ENCODE measurements at regions of chr1 and their contacts with region 1.

Region 1: GRCh38 chr1:115138968-115139367 is 49.7 kb upstream of the TSPAN2 start:
- DNase-seq: peak; percentile 44 to 96 (median 74)

Region 2: DNA sequence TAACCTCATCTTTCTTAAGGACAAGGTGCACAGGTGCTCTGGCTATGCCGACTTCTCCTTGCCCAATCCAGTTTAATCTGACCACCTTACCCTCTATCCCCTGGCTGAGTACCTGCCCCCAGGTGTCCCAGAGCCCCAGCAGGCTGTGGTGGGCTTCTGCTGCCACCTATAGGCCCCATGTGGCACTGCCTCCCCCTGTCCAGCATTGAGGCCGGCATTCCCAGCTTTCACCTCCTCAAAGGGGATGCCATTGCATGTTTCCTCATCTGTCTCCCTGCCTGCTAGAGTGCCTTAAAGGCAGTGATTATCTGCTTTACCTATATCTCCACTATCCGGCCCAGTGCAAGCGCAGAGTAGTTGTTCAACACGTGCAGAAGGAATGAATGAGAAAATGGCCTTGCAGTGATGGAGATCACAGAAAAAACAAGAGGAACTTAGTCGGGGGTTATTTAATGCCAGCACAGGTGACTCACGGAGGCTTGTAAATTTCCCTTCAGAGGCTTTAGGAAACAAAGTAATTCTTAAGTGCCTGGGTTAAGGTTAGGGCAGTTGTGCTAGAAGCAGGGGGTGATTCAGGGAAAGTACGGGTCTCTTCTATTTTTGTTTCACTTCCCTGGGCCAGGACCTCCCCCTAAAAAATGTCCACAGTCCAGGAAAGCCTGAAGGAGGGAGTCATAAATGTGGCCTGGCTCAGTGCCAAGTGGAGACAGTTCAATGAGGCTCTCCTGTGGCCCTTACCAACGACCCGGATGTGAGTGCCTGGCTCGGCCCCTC is 330.9 kb after region 1 on chr1:
- intact Hi-C with region 1: loop called (anchors 1 kb)
- DNase-seq: peak in 8 of 10 donors; percentile 34 to 92 (median 47)

Region 3: DNA sequence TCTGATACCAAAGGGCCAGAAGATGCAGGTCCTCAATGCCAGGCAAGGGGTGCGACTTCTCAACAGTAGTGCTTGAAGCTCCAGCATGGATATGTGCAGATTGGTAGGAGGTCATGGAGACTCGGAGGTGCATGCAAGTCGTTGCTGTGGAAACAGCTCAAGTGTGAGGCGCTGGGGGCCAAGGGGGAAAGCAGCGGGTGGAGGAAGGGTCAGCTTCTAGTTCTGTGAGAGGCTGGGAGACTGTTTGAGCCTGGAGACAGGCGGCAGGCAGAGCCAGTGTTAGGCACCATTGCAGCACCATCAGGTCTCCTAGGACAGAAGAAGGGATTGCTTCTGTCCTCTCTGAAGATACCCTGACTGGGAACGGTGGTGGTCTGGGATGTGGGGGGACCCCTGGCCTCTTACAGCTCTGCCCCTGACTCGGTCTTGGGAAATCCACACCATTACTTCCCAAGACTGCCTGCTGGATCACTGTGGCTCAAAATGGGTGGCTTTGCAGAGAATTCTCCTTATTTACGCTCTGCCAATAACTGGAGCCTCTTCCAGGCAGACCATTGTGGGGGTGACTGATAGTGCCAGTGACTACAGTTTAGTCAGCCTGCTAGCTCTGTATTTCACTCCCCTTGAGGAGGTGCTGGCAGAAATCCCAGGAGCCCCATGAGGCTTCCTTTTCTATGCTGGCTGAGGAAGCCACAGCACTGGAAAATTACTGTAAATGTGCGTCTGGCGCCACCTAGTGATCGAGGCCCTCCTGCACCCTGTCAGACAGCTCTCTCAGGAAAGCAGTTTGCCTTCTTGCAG is 456.5 kb after region 1 on chr1:
- intact Hi-C with region 1: loop called (anchors 1 kb)
- DNase-seq: peak; percentile 75 to 97 (median 88)

Region 4: GRCh38 chr1:115771847-115772457 is 633.0 kb after region 1 on chr1:
- intact Hi-C with region 1: loop called (anchors 5 kb)
- DNase-seq: peak in 4 of 10 donors; percentile 25 to 39 (median 34)

Measured in posterior cingulate gyrus (tissue), 11 donors.